ENCODE measurements at regions of chr9 and their contacts with region 1.

Region 1: GRCh38 chr9:133023117-133023890 is 7.5 kb upstream of the GTF3C5 start:
- DNase-seq: peak in 2 of 5 donors; percentile 18 to 58
- H3K4me3 ChIP-seq: no peak overlapping the region
- H3K4me3 Mint-ChIP-seq: no peak overlapping the region
- H3K27ac ChIP-seq: no peak overlapping the region
- H3K27ac Mint-ChIP-seq: no peak overlapping the region
- H3K4me1 ChIP-seq: no peaks in the 10 kb centered on the region
- H3K4me1 Mint-ChIP-seq: peaks cover 10 to 17% (median 11%) of the 10 kb centered on the region in 3 donors
- H3K27me3 ChIP-seq: no peaks in the 10 kb centered on the region
- H3K27me3 Mint-ChIP-seq: peaks cover 0 to 5% of the 10 kb centered on the region in 2 donors

Region 2: DNA sequence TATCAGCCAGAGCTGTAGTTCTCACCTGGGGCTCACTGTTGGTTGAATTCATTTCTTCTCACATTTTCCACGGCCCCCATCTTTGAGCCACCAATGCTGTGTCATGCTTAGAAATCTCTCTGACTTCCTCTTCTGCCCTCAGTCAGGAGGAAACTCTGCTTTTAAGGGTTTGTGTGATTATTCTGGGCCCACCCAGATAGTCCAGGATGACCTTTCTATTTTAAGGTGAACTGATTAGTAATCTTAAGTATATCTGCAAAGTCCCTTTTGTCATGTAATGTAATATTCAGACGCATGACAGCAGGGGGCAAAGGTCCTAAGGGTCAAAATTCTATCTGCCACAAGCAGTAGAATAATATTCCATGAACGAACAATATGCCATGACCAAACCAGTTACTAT is 233.6 kb before region 1 on chr9:
- CTCF ChIA-PET with region 1: no interaction called
- POLR2A ChIA-PET with region 1: no interaction called
- DNase-seq: no peak
- H3K4me3 ChIP-seq: no peak overlapping the region
- H3K4me3 Mint-ChIP-seq: no peak overlapping the region
- H3K27ac ChIP-seq: no peak overlapping the region
- H3K27ac Mint-ChIP-seq: no peak overlapping the region
- H3K4me1 ChIP-seq: no peaks in the 10 kb centered on the region
- H3K4me1 Mint-ChIP-seq: no peaks in the 10 kb centered on the region
- H3K27me3 ChIP-seq: peaks cover 5% of the 10 kb centered on the region
- H3K27me3 Mint-ChIP-seq: peaks cover 16 to 46% of the 10 kb centered on the region in 2 donors

Region 3: DNA sequence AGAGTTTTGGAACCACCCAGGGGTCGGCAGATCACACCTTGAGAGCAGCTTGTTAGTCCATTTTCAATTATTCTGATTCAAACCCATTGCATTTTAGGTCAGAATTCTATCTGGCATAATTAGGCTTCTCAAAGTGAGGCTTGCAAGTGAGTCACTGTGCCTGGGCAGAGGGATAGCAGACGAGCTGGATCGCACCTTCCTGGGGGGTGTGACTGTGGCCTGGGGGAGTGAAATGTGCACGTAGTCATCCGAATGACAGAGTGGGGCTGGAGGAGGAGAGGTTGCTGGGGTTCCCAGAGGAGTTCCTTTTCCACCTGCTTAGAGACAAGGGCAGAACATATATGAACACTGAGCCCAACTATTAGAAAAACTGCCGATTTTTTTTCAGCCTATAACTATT is 112.9 kb before region 1 on chr9:
- CTCF ChIA-PET with region 1: no interaction called
- POLR2A ChIA-PET with region 1: no interaction called
- DNase-seq: no peak
- H3K4me3 ChIP-seq: no peak overlapping the region
- H3K4me3 Mint-ChIP-seq: peak overlapping the region in 1 of 7 donors; percentile 41
- H3K27ac ChIP-seq: no peak overlapping the region
- H3K27ac Mint-ChIP-seq: peak overlapping the region in 4 of 8 donors; percentile 29 to 80 (median 44)
- H3K4me1 ChIP-seq: peaks cover 13% of the 10 kb centered on the region
- H3K4me1 Mint-ChIP-seq: peaks cover 16 to 20% (median 17%) of the 10 kb centered on the region in 3 donors
- H3K27me3 ChIP-seq: no peaks in the 10 kb centered on the region
- H3K27me3 Mint-ChIP-seq: peaks cover 0 to 5% of the 10 kb centered on the region in 2 donors

Region 4: DNA sequence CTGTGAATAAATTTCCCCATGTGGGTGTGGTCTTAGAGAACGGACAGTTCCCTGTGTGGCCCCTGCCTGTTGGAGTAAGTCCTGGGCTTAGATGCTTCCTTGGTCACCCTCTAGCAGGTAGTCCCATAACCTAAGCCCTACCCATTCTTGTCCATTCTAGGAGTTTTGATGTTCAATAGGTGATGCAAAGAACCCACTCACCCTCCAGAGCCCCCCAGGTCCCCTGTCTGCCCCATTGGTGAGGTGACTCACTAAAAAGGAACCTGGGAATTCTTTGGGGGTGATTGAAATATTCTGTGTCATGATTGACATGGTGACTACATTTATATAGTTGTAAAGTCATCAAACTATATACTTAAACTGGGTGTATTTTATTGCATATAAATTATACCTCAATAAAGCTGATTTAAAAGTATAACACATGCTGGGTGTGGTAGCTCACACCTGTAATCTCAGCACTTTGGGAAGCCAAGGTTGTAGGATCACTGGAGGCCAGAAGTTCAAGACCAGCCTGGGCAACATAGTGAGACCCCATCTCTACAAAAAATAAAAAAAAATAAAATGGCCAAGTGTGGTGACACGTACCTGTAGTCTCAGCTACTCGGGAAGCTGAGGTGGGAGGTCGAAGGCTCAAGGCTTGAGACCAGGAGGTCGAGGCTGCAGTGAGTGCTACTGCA is 13.3 kb before region 1 on chr9:
- CTCF ChIA-PET with region 1: interaction called, 12 read pairs
- POLR2A ChIA-PET with region 1: no interaction called
- DNase-seq: no peak
- H3K4me3 ChIP-seq: no peak overlapping the region
- H3K4me3 Mint-ChIP-seq: no peak overlapping the region
- H3K27ac ChIP-seq: no peak overlapping the region
- H3K27ac Mint-ChIP-seq: no peak overlapping the region
- H3K4me1 ChIP-seq: no peaks in the 10 kb centered on the region
- H3K4me1 Mint-ChIP-seq: no peaks in the 10 kb centered on the region
- H3K27me3 ChIP-seq: peaks cover 6% of the 10 kb centered on the region
- H3K27me3 Mint-ChIP-seq: peaks cover 11 to 50% of the 10 kb centered on the region in 2 donors

Region 5: DNA sequence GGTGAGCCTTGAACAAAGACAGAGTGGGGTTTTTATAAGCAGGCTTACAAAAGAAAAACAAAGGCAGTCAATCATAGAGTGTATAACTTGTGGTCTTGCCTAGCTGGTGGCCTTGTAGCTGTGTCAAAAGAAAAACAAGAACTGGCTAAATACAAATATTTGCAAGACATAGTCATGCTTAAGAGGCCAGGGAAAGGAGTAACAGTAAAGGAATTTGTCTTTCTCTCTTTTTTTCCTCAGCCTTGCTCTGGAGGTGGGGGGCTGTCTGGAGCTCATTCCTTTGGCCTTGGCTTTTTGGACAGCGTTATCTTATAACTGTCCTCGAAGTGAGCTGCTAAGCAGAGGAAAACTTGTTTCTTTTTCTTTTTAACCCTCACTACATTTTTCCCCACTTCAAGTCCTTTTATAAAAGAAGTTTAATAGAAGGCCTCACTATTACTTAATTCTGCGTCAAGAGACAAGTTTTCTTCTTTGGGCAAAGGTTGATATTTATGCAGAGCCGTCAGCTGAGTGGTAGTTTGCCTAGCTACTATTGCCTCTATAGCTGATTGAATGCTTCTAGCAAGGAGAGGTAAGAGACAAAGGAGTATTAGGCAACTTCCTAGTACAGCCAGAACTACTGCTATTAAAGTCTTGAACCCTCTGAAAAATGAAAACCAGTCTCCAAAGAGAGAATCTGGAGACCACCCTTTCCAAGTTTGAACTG is 52.8 kb after region 1 on chr9:
- CTCF ChIA-PET with region 1: no interaction called
- POLR2A ChIA-PET with region 1: no interaction called
- DNase-seq: no peak
- H3K4me3 ChIP-seq: no peak overlapping the region
- H3K4me3 Mint-ChIP-seq: no peak overlapping the region
- H3K27ac ChIP-seq: no peak overlapping the region
- H3K27ac Mint-ChIP-seq: no peak overlapping the region
- H3K4me1 ChIP-seq: no peaks in the 10 kb centered on the region
- H3K4me1 Mint-ChIP-seq: no peaks in the 10 kb centered on the region
- H3K27me3 ChIP-seq: no peaks in the 10 kb centered on the region
- H3K27me3 Mint-ChIP-seq: peaks cover 0 to 3% of the 10 kb centered on the region in 2 donors

Measured in CD8-positive, alpha-beta memory T cell (primary cell).